AG04450 (cell line): ENCODE measurements at regions of chr5 and their contacts with region 1.

Region 1: DNA sequence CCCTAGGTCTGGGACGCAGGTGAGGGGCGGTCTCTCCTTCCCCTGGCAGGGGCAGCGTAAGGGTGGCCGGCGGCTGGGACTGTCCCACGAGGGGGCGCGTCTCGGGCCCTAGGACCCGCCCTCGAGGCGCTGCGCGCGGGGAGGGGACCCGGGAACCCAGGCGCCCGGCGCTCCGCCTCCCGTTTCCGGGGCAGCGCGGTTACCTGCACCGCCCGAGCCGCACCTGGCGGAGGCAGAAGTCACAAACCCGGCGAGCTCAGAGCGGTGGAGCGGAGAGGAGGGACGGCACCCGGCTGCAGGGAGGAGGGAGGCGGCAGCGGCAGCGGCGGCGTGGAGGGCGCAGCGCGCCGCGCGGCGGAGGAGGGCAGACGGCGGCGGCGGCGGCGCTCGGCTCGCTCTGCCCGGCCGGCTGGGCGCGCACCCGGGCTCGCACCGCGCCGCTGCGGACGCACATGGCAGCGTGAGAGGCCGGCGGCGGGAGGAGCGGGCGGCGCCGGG is at the start of gene WWC1:
- DNase-seq: no peak
- H3K4me3 ChIP-seq: peak within 1 kb of the TSS; percentile 71
- H3K27ac ChIP-seq: no peak within 1 kb of the TSS
- H3K27me3 ChIP-seq: no peaks in the 10 kb centered on the region
- CTCF ChIP-seq: no peak
- polyA plus RNA-seq, gene WWC1: 4.3 and 5.2 TPM in 2 replicates

Region 2: GRCh38 chr5:168302785-168303184 is 11.3 kb after region 1 on chr5:
- CTCF ChIA-PET with region 1: interaction called, 74 read pairs
- POLR2A ChIA-PET with region 1: no interaction called
- DNase-seq: no peak
- H3K4me3 ChIP-seq: no peak overlapping the region
- H3K27ac ChIP-seq: no peak overlapping the region
- H3K27me3 ChIP-seq: no peaks in the 10 kb centered on the region
- CTCF ChIP-seq: no peak

Region 3: GRCh38 chr5:168317521-168318147 is 26.1 kb after region 1 on chr5:
- CTCF ChIA-PET with region 1: interaction called, 38 read pairs
- POLR2A ChIA-PET with region 1: interaction called, 6 read pairs
- DNase-seq: peak; percentile 96
- H3K4me3 ChIP-seq: no peak overlapping the region
- H3K27ac ChIP-seq: peak overlapping the region; percentile 97
- H3K27me3 ChIP-seq: no peaks in the 10 kb centered on the region
- CTCF ChIP-seq: no peak

Region 4: DNA sequence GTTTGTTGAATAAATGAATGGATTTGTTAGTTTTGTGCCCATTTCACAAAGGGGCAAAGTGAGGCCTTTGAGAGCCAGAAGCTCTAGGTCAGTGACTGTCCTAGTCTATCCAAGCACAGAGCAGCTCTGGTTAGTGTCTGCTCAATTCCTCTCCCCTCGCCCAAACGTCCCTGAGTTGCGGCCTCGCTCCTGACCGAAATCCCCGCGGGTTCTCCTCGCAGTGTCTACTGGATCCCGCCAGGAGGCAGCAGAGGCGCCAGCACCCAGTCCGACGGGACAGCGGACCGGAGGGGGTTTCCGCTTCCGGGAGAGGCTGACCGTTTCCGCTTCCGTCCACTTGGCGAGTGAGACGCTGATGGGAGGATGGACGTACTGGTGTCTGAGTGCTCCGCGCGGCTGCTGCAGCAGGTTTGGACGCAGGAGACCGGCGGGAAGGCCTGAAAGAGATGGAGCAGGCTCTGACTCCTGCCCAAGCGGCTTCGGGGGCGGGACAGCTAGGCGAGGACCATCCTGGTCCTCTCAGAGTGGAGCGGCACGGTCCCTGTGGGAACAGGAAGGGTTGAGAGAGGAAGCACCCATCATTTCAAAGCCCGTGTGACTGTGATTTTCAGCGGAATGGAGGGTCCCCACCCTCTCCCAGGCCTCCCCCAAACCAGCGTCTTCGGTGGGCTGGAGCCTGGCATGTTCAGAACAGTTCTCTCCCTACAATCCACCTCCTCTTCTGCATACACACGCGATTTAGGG is 194.8 kb after region 1 on chr5 and contains the start of gene RARS1:
- CTCF ChIA-PET with region 1: interaction called, 22 read pairs
- POLR2A ChIA-PET with region 1: no interaction called
- DNase-seq: peak; percentile 86
- H3K4me3 ChIP-seq: peak within 1 kb of the TSS; percentile 76
- H3K27ac ChIP-seq: peak within 1 kb of the TSS; percentile 57
- H3K27me3 ChIP-seq: no peaks in the 10 kb centered on the region
- CTCF ChIP-seq: peak; percentile 98
- polyA plus RNA-seq, gene RARS1: 112 and 147 TPM in 2 replicates